ENCODE measurements at regions of chr4 and their contacts with region 1.

Region 1: GRCh38 chr4:76640353-76640910 is 205.4 kb downstream of the SHROOM3 start:
- DNase-seq: peak; percentile 73
- H3K4me3 Mint-ChIP-seq: peak overlapping the region; percentile 70
- H3K27ac Mint-ChIP-seq: peak overlapping the region; percentile 98
- H3K4me1 Mint-ChIP-seq: peaks cover 43% of the 10 kb centered on the region
- H3K27me3 Mint-ChIP-seq: no peaks in the 10 kb centered on the region
- CTCF ChIP-seq: no peak

Region 2: DNA sequence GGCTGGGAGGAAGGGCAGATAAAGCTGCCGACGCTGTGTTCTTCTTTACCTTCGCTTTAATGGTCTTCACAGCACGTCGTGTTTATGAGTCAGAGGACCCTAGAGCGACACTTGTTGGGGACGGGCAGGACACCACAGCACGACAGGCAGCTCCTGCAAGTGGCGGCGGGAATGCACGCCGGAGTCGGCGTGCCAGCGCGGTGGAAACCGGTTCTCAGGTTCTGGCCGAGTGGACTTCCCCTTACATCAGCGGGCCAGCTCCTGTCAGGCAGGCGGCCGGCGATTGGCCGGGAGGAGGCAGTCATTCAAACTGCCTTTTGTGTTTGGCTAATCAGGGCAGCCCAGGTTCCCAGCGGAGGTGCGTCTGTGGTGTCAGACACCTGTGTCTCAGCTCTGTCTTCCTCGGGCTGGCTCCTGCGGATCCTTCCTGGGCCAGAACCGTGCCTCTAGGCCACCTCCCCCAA is 54.5 kb before region 1 on chr4:
- CTCF ChIA-PET with region 1: interaction called, 3 read pairs
- POLR2A ChIA-PET with region 1: interaction called, 10 read pairs
- intact Hi-C with region 1: no loop called
- DNase-seq: peak; percentile 85
- H3K4me3 Mint-ChIP-seq: peak overlapping the region; percentile 72
- H3K27ac Mint-ChIP-seq: peak overlapping the region; percentile 70
- H3K4me1 Mint-ChIP-seq: peaks cover 29% of the 10 kb centered on the region
- H3K27me3 Mint-ChIP-seq: no peaks in the 10 kb centered on the region
- CTCF ChIP-seq: peak; percentile 17

Region 3: GRCh38 chr4:76665139-76665538 is 24.7 kb after region 1 on chr4:
- CTCF ChIA-PET with region 1: interaction called, 5 read pairs
- POLR2A ChIA-PET with region 1: interaction called, 5 read pairs
- intact Hi-C with region 1: loop called (anchors 1 kb)
- DNase-seq: peak; percentile 92
- H3K4me3 Mint-ChIP-seq: no peak overlapping the region
- H3K27ac Mint-ChIP-seq: peak overlapping the region; percentile 93
- H3K4me1 Mint-ChIP-seq: peaks cover 19% of the 10 kb centered on the region
- H3K27me3 Mint-ChIP-seq: no peaks in the 10 kb centered on the region
- CTCF ChIP-seq: no peak

Region 4: GRCh38 chr4:76733068-76733771 is 92.8 kb after region 1 on chr4:
- CTCF ChIA-PET with region 1: interaction called, 6 read pairs
- POLR2A ChIA-PET with region 1: no interaction called
- intact Hi-C with region 1: loop called (anchors 5 kb)
- DNase-seq: peak; percentile 61
- H3K4me3 Mint-ChIP-seq: no peak overlapping the region
- H3K27ac Mint-ChIP-seq: no peak overlapping the region
- H3K4me1 Mint-ChIP-seq: peaks cover 13% of the 10 kb centered on the region
- H3K27me3 Mint-ChIP-seq: no peaks in the 10 kb centered on the region
- CTCF ChIP-seq: peak; percentile 47

Region 5: DNA sequence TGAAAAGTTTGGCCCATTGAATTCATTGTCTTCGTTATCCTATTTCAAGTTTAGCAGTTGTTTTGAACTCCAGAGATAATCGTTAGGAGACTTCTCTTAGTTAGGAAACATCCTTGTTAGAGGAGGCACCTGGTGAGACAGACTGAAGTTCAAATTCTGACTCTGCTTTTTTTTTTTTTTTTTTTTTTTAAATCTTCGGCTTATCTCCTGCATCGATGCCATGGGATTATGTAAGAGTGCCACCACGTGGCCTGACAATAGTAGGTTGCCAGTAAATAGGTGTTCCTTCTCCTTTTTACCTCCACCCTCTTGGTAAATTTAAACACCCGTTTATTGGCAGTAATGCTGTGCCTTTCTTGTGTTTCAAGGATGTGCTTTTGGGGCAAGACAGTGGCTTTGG is 108.2 kb after region 1 on chr4:
- CTCF ChIA-PET with region 1: no interaction called
- POLR2A ChIA-PET with region 1: no interaction called
- intact Hi-C with region 1: loop called (anchors 5 kb)
- DNase-seq: peak; percentile 57
- H3K4me3 Mint-ChIP-seq: no peak overlapping the region
- H3K27ac Mint-ChIP-seq: no peak overlapping the region
- H3K4me1 Mint-ChIP-seq: peaks cover 25% of the 10 kb centered on the region
- H3K27me3 Mint-ChIP-seq: no peaks in the 10 kb centered on the region
- CTCF ChIP-seq: peak; percentile 7

Region 6: GRCh38 chr4:77433418-77433733 is 792.9 kb after region 1 on chr4:
- CTCF ChIA-PET with region 1: no interaction called
- POLR2A ChIA-PET with region 1: no interaction called
- intact Hi-C with region 1: no loop called
- DNase-seq: peak; percentile 72
- H3K4me3 Mint-ChIP-seq: no peak overlapping the region
- H3K27ac Mint-ChIP-seq: no peak overlapping the region
- H3K4me1 Mint-ChIP-seq: no peaks in the 10 kb centered on the region
- H3K27me3 Mint-ChIP-seq: no peaks in the 10 kb centered on the region
- CTCF ChIP-seq: peak; percentile 64